Dendritic cell treated with granulocyte-macrophage colony-stimulating factor and Interleukin-4, amounts not matched to agents 40 ng/mL and 50 ng/mL, for 4 days (primary cell): ENCODE measurements at regions of chr1 and their contacts with region 1.

Region 1: DNA sequence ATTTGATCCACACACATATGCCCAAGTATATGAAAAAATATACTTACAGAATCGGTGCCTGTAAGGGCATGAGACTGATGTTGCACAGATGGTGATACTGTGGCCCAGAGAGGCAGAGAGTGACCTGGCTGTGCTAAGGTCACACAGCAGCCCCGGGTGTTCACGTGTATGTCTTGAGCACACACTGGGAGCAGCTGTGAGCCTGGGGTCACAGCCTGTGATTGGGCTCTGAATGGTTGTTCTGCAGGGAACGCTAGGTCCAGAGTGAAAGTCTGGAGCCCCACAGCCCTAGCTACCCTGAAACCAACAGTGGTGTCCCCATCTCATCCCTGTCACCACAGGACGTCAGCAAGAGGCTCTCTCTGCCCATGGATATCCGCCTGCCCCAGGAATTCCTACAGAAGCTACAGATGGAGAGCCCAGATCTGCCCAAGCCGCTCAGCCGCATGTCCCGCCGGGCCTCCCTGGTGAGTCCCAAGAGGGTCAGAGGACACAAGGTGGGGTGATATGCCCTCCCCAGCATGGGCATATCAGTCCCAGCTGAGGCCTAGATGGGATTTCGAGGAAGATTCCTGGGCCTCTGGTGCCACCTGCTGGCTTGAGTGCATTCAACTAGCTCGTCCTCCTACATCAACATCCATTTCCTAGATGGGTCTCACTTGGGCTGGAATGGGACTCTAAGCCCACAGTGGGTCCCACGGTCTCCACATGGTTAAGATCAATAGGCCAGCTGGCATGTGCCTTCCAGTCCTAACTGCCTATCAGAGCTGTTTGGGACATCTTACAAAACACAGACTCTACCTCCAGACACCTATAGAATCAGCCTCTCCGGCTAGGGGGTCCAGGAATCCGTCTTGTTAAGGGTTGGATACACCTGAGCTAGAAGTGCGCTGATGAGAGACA is 19.7 kb downstream of the CDK18 start:
- H3K4me3 Mint-ChIP-seq: no peak overlapping the region
- H3K27ac Mint-ChIP-seq: no peak overlapping the region
- H3K4me1 Mint-ChIP-seq: peaks cover 8% of the 10 kb centered on the region
- H3K27me3 Mint-ChIP-seq: peaks cover 9% of the 10 kb centered on the region

Region 2: GRCh38 chr1:205098242-205098641 is 425.9 kb before region 1 on chr1:
- intact Hi-C with region 1: no loop called
- H3K4me3 Mint-ChIP-seq: no peak overlapping the region
- H3K27ac Mint-ChIP-seq: no peak overlapping the region
- H3K4me1 Mint-ChIP-seq: no peaks in the 10 kb centered on the region
- H3K27me3 Mint-ChIP-seq: no peaks in the 10 kb centered on the region

Region 3: DNA sequence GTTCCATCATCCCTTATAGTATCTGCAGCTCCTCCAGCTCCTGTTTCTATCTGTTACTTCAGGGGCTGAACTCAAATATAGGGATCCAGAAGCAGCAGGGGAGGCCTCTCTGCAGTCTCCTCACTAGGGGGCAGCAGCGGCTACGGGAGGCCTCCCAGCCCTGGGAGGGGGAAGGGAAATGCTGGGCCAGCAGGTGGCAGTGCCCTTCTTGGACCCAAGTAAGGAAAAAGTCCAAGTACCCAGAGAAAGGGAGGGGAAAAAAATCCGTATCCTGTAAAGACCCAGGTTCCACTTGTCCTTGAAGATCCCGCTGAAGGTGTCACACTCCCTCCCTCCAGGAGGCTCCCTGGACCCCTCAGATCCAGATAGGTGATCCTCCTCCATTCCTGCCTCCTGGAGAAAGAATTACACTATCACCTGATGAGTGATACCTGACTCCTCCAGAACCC is 188.5 kb before region 1 on chr1:
- intact Hi-C with region 1: loop called (anchors 5 kb)
- H3K4me3 Mint-ChIP-seq: no peak overlapping the region
- H3K27ac Mint-ChIP-seq: no peak overlapping the region
- H3K4me1 Mint-ChIP-seq: no peaks in the 10 kb centered on the region
- H3K27me3 Mint-ChIP-seq: peaks cover 48% of the 10 kb centered on the region

Region 4: DNA sequence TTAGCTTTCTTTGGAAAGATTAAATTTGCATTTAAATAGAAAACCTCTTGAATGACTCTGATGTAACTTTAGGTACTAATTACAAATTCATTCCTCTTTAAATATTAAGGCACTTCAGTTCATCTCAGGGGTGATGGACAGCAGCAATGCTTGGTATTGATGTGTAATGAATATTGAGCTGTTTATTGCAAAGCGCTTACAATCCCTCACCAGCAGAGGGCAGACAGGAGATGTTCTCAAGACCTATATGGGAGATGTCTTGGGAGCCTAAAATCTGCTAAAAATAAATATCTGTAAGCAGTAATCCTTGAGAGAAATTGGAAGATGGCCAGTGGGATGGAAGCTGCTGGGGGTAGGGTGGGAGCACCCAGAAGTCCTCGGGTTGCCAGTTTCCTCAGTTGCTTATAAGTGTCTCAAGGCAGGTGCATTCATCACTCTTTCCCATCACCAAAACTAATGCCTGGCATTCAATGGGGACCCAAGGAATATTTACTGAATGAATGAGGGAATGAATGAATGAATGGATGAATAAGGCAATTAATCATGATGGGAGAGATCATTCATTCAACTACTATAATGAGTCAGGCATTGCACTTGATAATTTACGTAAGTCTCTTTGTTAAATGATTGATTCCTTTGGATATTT is 169.8 kb before region 1 on chr1:
- intact Hi-C with region 1: loop called (anchors 5 kb)
- H3K4me3 Mint-ChIP-seq: no peak overlapping the region
- H3K27ac Mint-ChIP-seq: no peak overlapping the region
- H3K4me1 Mint-ChIP-seq: peaks cover 8% of the 10 kb centered on the region
- H3K27me3 Mint-ChIP-seq: peaks cover 33% of the 10 kb centered on the region

Region 5: GRCh38 chr1:205396967-205397616 is 127.0 kb before region 1 on chr1:
- intact Hi-C with region 1: loop called (anchors 1 kb)
- H3K4me3 Mint-ChIP-seq: no peak overlapping the region
- H3K27ac Mint-ChIP-seq: no peak overlapping the region
- H3K4me1 Mint-ChIP-seq: no peaks in the 10 kb centered on the region
- H3K27me3 Mint-ChIP-seq: peaks cover 25% of the 10 kb centered on the region

Region 6: GRCh38 chr1:205485338-205486228 is 38.6 kb before region 1 on chr1:
- intact Hi-C with region 1: loop called (anchors 1 kb)
- H3K4me3 Mint-ChIP-seq: no peak overlapping the region
- H3K27ac Mint-ChIP-seq: no peak overlapping the region
- H3K4me1 Mint-ChIP-seq: no peaks in the 10 kb centered on the region
- H3K27me3 Mint-ChIP-seq: peaks cover 86% of the 10 kb centered on the region

Region 7: GRCh38 chr1:205500240-205501233 is 23.6 kb before region 1 on chr1:
- intact Hi-C with region 1: no loop called
- H3K4me3 Mint-ChIP-seq: no peak overlapping the region
- H3K27ac Mint-ChIP-seq: no peak overlapping the region
- H3K4me1 Mint-ChIP-seq: peaks cover 9% of the 10 kb centered on the region
- H3K27me3 Mint-ChIP-seq: peaks cover 26% of the 10 kb centered on the region